ENCODE measurements at regions of chr6 and their contacts with region 1.

Region 1: GRCh38 chr6:8131256-8131897 is 29.0 kb upstream of the EEF1E1 start:
- ATAC-seq: peak; percentile 77 to 99 (median 85)
- H3K4me3 ChIP-seq: no peak overlapping the region
- H3K27ac ChIP-seq: no peak overlapping the region
- H3K4me1 ChIP-seq: no peaks in the 10 kb centered on the region

Region 2: DNA sequence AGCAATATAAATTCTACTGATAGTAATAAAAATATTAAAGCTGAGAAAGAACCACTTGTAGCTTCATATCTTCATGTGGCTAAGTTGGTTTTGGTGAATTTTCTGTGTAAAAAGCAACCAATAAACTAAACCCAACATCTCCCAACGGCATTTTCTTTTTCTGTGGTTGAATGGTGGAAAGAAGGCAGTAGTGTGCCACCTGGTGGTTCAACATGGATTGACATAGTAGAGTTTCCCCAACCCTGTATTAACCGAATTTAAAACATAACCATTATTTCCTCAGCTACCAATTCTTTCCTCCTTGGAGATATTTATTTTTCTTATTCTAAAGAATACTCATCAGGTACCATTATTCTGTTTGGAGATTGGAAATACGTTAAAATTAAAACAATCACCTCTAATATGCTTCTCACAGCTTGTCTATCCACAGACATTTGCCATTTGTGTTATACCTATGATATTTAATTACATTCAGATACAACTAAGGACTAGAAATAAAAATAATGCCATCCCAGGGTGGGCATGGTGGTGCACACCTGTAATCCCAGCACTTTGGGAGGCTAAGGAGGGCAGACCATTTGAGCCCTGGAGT is 88.1 kb after region 1 on chr6:
- in situ Hi-C with region 1: loop called in 2 of 9 experiments (anchors 5 to 10 kb)
- ATAC-seq: peak in 3 of 8 experiments; percentile 56 to 75 (median 71)
- H3K4me3 ChIP-seq: no peak overlapping the region
- H3K27ac ChIP-seq: no peak overlapping the region
- H3K4me1 ChIP-seq: no peaks in the 10 kb centered on the region

Region 3: GRCh38 chr6:8229915-8230756 is 98.8 kb after region 1 on chr6:
- in situ Hi-C with region 1: loop called in 1 of 9 experiments (anchors 10 kb)
- ATAC-seq: peak in 4 of 8 experiments; percentile 24 to 68 (median 33)
- H3K4me3 ChIP-seq: no peak overlapping the region
- H3K27ac ChIP-seq: no peak overlapping the region
- H3K4me1 ChIP-seq: peaks cover 9 to 12% of the 10 kb centered on the region in 2 donors

Measured in motor neuron (in vitro differentiated cells).